ENCODE measurements at regions of chr12 and their contacts with region 1.

Region 1: DNA sequence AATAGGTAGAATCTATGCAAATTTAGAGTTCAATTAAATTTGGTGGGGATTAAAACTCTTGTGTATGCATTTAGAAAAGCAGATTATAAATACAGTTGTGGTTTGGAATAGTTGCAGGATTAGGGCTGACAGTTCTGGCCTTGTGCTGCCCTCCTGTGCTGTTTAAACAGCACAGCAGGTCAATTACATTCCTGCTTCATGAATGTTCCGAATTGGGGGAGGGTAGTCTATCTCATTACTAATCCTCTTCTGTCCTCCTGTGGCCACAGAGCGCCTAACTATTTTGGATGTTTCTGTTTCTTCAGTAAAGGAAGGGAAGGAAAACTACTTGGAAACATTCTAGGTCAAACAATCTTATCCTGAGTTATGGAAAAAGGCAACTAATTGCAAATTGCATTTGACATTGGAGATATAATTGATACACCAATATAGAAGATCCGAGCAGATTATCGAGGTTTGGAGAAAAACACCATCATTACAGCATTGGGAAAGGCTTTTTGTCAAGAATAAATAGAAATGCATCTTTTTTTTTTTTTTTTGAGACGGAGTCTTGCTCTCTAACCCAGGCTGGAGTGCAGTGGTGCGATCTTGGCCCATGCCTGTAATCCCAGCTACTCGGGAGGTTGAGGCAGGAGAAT is 8.7 kb upstream of the GPR19 start:
- DNase-seq: peak in 7 of 14 experiments; percentile 22 to 84 (median 57)
- ATAC-seq: peak; percentile 88
- H3K4me3 ChIP-seq: no peak overlapping the region
- H3K4me3 Mint-ChIP-seq: peak overlapping the region; percentile 32
- H3K27ac ChIP-seq: no peak overlapping the region
- H3K27ac Mint-ChIP-seq: peak overlapping the region; percentile 69
- H3K4me1 ChIP-seq: peaks cover 29% of the 10 kb centered on the region
- H3K4me1 Mint-ChIP-seq: peaks cover 29% of the 10 kb centered on the region
- H3K27me3 ChIP-seq: no peaks in the 10 kb centered on the region
- H3K27me3 Mint-ChIP-seq: no peaks in the 10 kb centered on the region
- CTCF ChIP-seq: peak; percentile 73

Region 2: DNA sequence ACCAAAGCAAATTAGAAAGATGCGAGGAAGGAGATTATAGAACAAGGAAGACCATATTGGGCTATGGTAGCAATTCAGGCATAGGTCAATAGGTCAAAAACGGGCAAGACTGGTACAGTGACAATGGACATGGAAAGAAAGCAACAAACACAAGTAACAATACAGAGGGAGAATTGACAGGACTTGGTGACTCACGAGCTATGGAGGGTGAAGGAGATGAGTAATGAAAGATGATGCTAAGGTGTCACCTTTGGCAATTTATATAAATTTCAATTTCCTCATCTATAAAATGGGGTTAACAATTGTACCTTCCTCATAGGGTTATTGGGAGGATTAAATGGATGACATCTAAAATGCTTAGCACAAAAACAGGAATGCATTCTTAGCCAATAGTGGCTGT is 126.9 kb before region 1 on chr12:
- CTCF ChIA-PET with region 1: no interaction called
- POLR2A ChIA-PET with region 1: no interaction called
- intact Hi-C with region 1: no loop called
- DNase-seq: no peak
- ATAC-seq: no peak
- H3K4me3 ChIP-seq: no peak overlapping the region
- H3K4me3 Mint-ChIP-seq: no peak overlapping the region
- H3K27ac ChIP-seq: no peak overlapping the region
- H3K27ac Mint-ChIP-seq: no peak overlapping the region
- H3K4me1 ChIP-seq: peaks cover 5% of the 10 kb centered on the region
- H3K4me1 Mint-ChIP-seq: peaks cover 12% of the 10 kb centered on the region
- H3K27me3 ChIP-seq: no peaks in the 10 kb centered on the region
- H3K27me3 Mint-ChIP-seq: no peaks in the 10 kb centered on the region
- CTCF ChIP-seq: no peak

Region 3: DNA sequence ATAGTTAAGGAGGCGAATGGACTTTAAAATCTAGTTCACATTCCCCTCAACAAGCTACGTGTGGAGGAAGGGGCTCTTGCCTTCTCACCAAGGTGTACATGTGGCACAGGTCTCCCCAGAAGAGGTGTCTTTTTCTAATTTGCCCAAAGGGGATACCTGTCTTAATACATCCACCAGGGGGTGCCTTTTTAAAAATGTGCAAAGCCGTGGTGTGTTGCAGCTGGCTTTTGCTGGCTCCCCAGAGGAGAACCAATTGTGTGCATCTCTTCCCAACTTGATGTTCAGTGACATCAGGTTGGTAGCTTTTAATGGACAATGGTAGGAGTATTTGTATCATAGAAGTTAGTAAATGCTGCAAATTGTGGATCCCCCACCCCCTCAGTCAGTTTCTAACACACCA is 59.2 kb before region 1 on chr12:
- CTCF ChIA-PET with region 1: no interaction called
- POLR2A ChIA-PET with region 1: no interaction called
- intact Hi-C with region 1: loop called (anchors 1 kb)
- DNase-seq: peak in 12 of 14 experiments; percentile 4 to 79 (median 33)
- ATAC-seq: peak; percentile 91
- H3K4me3 ChIP-seq: no peak overlapping the region
- H3K4me3 Mint-ChIP-seq: no peak overlapping the region
- H3K27ac ChIP-seq: no peak overlapping the region
- H3K27ac Mint-ChIP-seq: peak overlapping the region; percentile 14
- H3K4me1 ChIP-seq: peaks cover 6% of the 10 kb centered on the region
- H3K4me1 Mint-ChIP-seq: peaks cover 6% of the 10 kb centered on the region
- H3K27me3 ChIP-seq: no peaks in the 10 kb centered on the region
- H3K27me3 Mint-ChIP-seq: no peaks in the 10 kb centered on the region
- CTCF ChIP-seq: peak; percentile 56

Region 4: DNA sequence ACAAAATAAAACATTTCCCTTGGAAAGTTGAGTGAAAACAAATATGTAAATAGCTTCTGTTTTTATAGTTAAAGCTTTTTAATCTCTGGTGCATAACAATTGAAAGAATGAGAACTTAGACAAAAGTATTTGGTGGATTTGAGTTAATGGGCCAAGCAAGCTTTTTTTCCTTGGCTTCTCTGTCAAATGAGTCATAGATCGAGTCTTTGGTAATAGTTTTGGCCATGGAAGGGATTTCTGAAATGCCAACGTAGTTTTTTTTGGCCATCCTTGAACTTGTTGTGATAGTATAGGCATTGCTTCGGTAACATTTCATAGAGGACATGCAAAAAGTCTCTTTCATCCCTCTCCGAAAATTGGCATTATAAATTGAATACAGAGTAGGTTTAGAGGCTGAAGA is 43.6 kb before region 1 on chr12:
- CTCF ChIA-PET with region 1: no interaction called
- POLR2A ChIA-PET with region 1: no interaction called
- intact Hi-C with region 1: loop called in 1 of 2 experiments (anchors 1 kb)
- DNase-seq: no peak
- ATAC-seq: no peak
- H3K4me3 ChIP-seq: no peak overlapping the region
- H3K4me3 Mint-ChIP-seq: no peak overlapping the region
- H3K27ac ChIP-seq: no peak overlapping the region
- H3K27ac Mint-ChIP-seq: no peak overlapping the region
- H3K4me1 ChIP-seq: peaks cover 2% of the 10 kb centered on the region
- H3K4me1 Mint-ChIP-seq: peaks cover under 1% of the 10 kb centered on the region
- H3K27me3 ChIP-seq: no peaks in the 10 kb centered on the region
- H3K27me3 Mint-ChIP-seq: no peaks in the 10 kb centered on the region
- CTCF ChIP-seq: no peak